A673 (cell line): ENCODE measurements at regions of chr7 and their contacts with region 1.

Region 1: GRCh38 chr7:13850185-13850752 is 139.2 kb downstream of the ETV1 start:
- DNase-seq: peak; percentile 98
- H3K4me3 ChIP-seq: peak overlapping the region; percentile 14
- H3K27ac ChIP-seq: peak overlapping the region; percentile 93
- H3K4me1 ChIP-seq: peaks cover 46% of the 10 kb centered on the region
- H3K27me3 ChIP-seq: no peaks in the 10 kb centered on the region
- CTCF ChIP-seq: no peak

Region 2: DNA sequence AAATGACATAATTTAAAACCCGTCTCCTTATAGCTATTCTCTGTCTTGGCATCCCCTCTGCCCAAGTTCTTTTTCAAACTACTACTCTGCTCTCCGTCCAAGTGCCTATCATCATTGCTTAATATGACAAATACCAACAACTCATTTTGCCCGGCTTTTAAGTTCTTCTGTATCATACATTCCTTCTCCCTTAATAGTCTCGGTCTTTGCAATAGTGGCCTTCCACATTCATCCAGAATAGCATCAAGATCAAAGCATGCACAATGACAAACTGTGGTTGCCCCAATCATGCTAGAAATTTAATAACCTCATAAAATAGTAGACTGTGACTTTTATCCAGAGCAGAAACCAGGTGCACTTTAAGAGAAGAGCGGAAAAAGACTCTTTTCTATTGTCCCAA is 59.7 kb before region 1 on chr7:
- CTCF ChIA-PET with region 1: no interaction called
- POLR2A ChIA-PET with region 1: no interaction called
- intact Hi-C with region 1: no loop called
- DNase-seq: no peak
- H3K4me3 ChIP-seq: no peak overlapping the region
- H3K27ac ChIP-seq: no peak overlapping the region
- H3K4me1 ChIP-seq: no peaks in the 10 kb centered on the region
- H3K27me3 ChIP-seq: no peaks in the 10 kb centered on the region
- CTCF ChIP-seq: no peak

Region 3: DNA sequence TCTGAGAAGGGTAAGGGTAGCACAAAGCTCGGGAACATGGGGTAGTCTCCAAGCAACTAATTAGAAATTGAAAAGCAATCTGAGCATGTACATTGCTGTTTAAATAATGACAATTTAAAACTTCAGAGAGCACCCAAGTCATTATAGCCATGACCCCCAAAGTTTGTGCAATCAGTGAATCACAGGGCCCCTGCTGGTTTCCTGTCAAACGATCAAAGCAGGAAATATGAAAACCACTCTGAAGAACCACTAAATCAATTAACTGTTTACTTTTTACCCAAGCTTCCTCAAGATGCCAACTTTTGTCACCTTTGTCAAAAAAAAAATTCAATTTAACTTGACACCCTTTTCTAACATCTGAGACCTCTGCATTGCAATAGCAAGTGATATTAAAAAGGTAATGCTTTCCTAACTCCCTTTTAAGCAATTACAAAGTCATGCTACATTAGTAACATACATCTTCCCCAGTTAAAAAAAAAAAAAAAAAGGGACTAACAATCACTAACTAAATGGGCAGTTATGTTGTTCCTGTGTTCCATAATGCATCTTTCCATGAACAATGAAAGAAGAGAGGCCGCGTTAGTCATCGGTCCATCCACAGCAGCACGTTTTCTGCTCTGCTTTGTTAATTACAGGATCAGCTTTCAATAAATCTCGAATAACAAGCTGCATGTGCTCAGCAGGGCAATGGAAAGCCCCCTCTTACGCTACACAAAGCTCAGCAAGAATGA is 58.6 kb after region 1 on chr7:
- CTCF ChIA-PET with region 1: no interaction called
- POLR2A ChIA-PET with region 1: no interaction called
- intact Hi-C with region 1: loop called (anchors 2 kb)
- DNase-seq: peak; percentile 90
- H3K4me3 ChIP-seq: no peak overlapping the region
- H3K27ac ChIP-seq: peak overlapping the region; percentile 46
- H3K4me1 ChIP-seq: peaks cover 81% of the 10 kb centered on the region
- H3K27me3 ChIP-seq: no peaks in the 10 kb centered on the region
- CTCF ChIP-seq: no peak

Region 4: GRCh38 chr7:13963925-13964324 is 113.7 kb after region 1 on chr7:
- CTCF ChIA-PET with region 1: no interaction called
- POLR2A ChIA-PET with region 1: no interaction called
- intact Hi-C with region 1: no loop called
- DNase-seq: no peak
- H3K4me3 ChIP-seq: no peak overlapping the region
- H3K27ac ChIP-seq: no peak overlapping the region
- H3K4me1 ChIP-seq: no peaks in the 10 kb centered on the region
- H3K27me3 ChIP-seq: no peaks in the 10 kb centered on the region
- CTCF ChIP-seq: no peak

Region 5: GRCh38 chr7:13981070-13981469 is 130.8 kb after region 1 on chr7:
- CTCF ChIA-PET with region 1: no interaction called
- POLR2A ChIA-PET with region 1: no interaction called
- intact Hi-C with region 1: loop called (anchors 2 kb)
- DNase-seq: peak; percentile 94
- H3K4me3 ChIP-seq: peak overlapping the region; percentile 13
- H3K27ac ChIP-seq: peak overlapping the region; percentile 82
- H3K4me1 ChIP-seq: peaks cover 63% of the 10 kb centered on the region
- H3K27me3 ChIP-seq: no peaks in the 10 kb centered on the region
- CTCF ChIP-seq: no peak

Region 6: GRCh38 chr7:14368285-14368684 is 518.0 kb after region 1 on chr7:
- CTCF ChIA-PET with region 1: no interaction called
- POLR2A ChIA-PET with region 1: no interaction called
- intact Hi-C with region 1: no loop called
- DNase-seq: no peak
- H3K4me3 ChIP-seq: no peak overlapping the region
- H3K27ac ChIP-seq: no peak overlapping the region
- H3K4me1 ChIP-seq: no peaks in the 10 kb centered on the region
- H3K27me3 ChIP-seq: no peaks in the 10 kb centered on the region
- CTCF ChIP-seq: no peak

Region 7: GRCh38 chr7:14457568-14458453 is 607.5 kb after region 1 on chr7:
- CTCF ChIA-PET with region 1: no interaction called
- POLR2A ChIA-PET with region 1: no interaction called
- intact Hi-C with region 1: loop called (anchors 5 kb)
- DNase-seq: peak; percentile 88
- H3K4me3 ChIP-seq: peak overlapping the region; percentile 15
- H3K27ac ChIP-seq: no peak overlapping the region
- H3K4me1 ChIP-seq: no peaks in the 10 kb centered on the region
- H3K27me3 ChIP-seq: no peaks in the 10 kb centered on the region
- CTCF ChIP-seq: peak; percentile 86

Region 8: GRCh38 chr7:14691597-14692203 is 841.4 kb after region 1 on chr7:
- CTCF ChIA-PET with region 1: interaction called, 3 read pairs
- POLR2A ChIA-PET with region 1: no interaction called
- intact Hi-C with region 1: loop called (anchors 5 kb)
- DNase-seq: peak; percentile 61
- H3K4me3 ChIP-seq: no peak overlapping the region
- H3K27ac ChIP-seq: no peak overlapping the region
- H3K4me1 ChIP-seq: peaks cover 4% of the 10 kb centered on the region
- H3K27me3 ChIP-seq: no peaks in the 10 kb centered on the region
- CTCF ChIP-seq: peak; percentile 92